ENCODE measurements at regions of chr10 and their contacts with region 1.

Region 1: DNA sequence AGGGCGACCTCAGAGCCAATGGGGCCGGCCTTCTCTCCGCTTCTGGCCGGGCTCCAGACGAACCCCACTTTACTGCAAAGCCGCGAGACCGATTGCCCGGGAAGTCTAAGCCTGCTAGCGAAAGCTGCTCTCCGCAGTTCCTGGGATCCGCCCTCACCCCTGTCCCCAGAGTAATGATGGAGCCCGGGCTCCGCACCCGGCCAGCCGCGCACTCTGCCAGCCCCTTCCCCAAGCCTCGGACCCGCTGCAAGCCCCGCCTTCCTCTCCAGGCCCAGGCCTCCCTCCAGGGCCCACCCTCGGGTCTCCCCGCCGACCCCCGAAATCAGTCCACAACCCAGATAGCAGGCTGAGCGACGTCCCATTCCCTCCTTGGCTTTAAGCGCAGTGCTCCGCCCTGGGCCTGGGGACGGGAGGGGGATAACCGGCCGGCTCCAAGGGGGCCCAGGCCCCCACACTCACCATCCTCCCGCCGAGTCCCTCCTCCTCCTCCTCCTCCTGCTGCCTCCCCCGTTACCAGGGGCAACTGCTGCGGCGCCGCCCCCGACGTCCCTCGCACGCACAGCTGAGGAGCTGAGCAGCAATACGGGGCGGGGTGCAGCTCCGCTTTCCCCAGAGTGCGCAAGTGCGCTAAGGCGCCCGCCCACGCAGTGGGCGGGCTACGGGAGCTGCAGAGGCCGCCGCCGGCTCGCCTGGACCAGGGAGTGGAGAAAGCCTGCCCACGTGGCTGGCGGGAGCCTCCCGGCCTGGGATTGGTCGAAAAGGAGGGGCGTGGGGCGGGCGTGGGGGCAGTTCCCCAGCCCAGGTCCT is at the start of gene ARL3:
- DNase-seq: peak; percentile 87
- H3K4me3 ChIP-seq: peak within 1 kb of the TSS; percentile 94
- H3K27me3 ChIP-seq: no peaks in the 10 kb centered on the region
- CTCF ChIP-seq: peak; percentile 67
- polyA plus RNA-seq, gene ARL3: 8.1 and 10.8 TPM in 2 replicates

Region 2: GRCh38 chr10:101257084-101257483 is 1456.9 kb before region 1 on chr10:
- CTCF ChIA-PET with region 1: no interaction called
- POLR2A ChIA-PET with region 1: interaction called, 10 read pairs
- DNase-seq: no peak
- H3K4me3 ChIP-seq: no peak overlapping the region
- H3K27me3 ChIP-seq: peaks cover 8% of the 10 kb centered on the region
- CTCF ChIP-seq: no peak

Region 3: DNA sequence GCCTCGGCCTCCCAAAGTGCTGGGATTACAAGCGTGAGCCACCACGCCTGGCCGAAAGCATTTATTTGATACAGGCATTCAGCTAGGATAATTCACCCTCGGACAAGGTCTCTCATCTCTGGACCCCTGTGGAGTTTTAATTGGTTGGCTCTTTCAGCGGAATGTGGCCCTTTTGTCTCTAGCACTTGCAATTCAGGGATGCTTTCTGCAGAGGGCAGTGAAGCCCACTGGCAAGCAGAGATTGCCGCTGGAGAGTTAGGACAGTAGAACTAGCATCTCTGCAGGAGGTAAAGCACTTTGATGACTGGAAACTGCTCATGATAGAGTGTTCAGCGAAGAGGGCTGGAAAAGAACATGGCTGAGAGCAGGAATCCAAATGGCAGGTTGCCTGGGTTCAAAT is 148.2 kb before region 1 on chr10:
- CTCF ChIA-PET with region 1: no interaction called
- POLR2A ChIA-PET with region 1: no interaction called
- DNase-seq: no peak
- H3K4me3 ChIP-seq: no peak overlapping the region
- H3K27me3 ChIP-seq: no peaks in the 10 kb centered on the region
- CTCF ChIP-seq: no peak

Region 4: GRCh38 chr10:102593074-102593803 is 120.8 kb before region 1 on chr10:
- CTCF ChIA-PET with region 1: no interaction called
- POLR2A ChIA-PET with region 1: no interaction called
- DNase-seq: peak; percentile 54
- H3K4me3 ChIP-seq: no peak overlapping the region
- H3K27me3 ChIP-seq: no peaks in the 10 kb centered on the region
- CTCF ChIP-seq: no peak

Region 5: GRCh38 chr10:102615361-102615760 is 98.7 kb before region 1 on chr10:
- CTCF ChIA-PET with region 1: no interaction called
- POLR2A ChIA-PET with region 1: no interaction called
- DNase-seq: no peak
- H3K4me3 ChIP-seq: no peak overlapping the region
- H3K27me3 ChIP-seq: no peaks in the 10 kb centered on the region
- CTCF ChIP-seq: peak; percentile 40; the same call in 1 of the 2 replicates

Region 6: GRCh38 chr10:102635377-102635776 is 78.6 kb before region 1 on chr10:
- CTCF ChIA-PET with region 1: no interaction called
- POLR2A ChIA-PET with region 1: no interaction called
- DNase-seq: no peak
- H3K4me3 ChIP-seq: no peak overlapping the region
- H3K27me3 ChIP-seq: no peaks in the 10 kb centered on the region
- CTCF ChIP-seq: no peak

Region 7: DNA sequence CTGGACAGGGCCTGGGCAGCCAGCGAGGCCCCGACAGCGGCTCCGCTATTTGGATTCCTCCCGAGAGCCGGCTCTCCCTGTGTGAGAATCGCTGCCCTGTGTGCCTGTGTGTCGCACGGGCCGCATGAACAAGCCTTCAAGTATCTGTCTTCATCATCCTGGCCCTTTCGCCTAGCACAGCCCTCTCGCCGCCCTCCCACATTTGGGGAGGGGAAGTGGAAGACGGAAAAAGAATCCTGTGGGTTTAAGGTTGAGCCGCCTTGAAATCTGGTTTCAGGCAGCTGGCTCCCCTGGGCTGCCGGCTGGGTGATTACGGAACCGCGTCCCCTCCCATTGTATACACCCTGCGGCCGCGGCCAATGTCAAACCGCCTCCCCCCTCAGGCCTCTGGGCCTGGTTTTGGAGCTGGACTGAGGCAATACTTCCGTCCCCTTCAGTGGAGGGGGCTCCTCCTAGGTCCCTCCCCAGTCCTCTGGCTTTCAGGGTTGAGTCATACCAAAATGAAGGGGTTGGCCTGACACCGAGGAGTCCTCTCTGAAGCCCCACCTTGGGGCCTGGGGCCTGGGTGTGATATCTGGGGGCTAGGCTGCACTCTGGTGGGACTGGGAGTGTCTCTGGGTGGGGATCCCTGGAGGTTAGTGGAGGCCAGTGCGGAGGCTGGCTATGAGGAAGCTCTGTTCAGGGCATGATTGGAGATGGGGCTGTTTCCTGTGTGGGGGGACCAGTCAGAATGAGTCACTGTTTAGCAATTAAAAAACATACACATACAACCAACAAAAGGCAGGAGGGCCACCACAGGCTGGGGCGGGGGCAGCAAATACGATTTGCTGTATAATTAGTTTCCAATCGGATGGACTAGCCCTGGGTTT is 68.0 kb before region 1 on chr10:
- CTCF ChIA-PET with region 1: interaction called, 10 read pairs
- POLR2A ChIA-PET with region 1: interaction called, 3 read pairs
- DNase-seq: peak; percentile 93
- H3K4me3 ChIP-seq: peak overlapping the region; percentile 87
- H3K27me3 ChIP-seq: no peaks in the 10 kb centered on the region
- CTCF ChIP-seq: no peak

Region 8: DNA sequence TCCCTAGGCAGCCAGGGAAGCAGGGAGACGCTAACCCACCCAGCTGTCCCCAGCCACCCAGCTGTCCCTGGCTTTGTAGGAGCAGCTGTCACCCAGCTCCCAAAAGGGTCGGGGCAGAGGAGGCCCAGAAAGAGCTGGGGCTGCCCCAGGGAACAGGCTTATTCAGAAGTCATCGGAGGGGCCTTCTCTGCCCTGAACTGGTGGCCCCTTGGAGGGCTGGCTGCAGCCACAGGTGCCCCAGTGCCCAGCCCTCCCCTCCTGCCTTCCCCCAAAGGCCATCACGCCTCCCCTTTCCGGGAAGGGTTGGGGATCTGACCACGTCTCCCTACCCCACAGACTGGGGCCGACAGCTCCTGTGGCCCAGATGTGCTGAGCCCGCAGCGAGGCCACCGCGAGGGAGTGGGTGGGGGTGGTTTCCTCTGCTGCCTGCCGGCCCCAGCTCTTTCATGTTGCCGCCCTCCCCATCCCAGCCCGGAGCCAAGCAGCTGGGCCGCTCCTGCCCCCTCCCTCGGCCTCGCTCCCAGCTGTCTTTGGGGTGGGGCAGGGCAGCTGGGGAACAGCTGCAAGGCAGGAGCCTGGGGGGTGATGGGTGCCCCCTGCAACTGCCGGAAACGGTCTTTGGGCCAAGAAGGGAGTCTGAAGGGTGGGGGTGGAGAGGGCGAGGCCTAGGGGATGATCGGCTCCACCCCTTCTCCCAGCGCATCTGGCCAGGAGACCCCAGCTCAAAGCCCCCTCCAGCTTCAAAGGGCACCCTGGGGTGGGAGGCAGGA is 52.9 kb before region 1 on chr10:
- CTCF ChIA-PET with region 1: interaction called, 3 read pairs
- POLR2A ChIA-PET with region 1: interaction called, 11 read pairs
- DNase-seq: peak; percentile 24
- H3K4me3 ChIP-seq: no peak overlapping the region
- H3K27me3 ChIP-seq: no peaks in the 10 kb centered on the region
- CTCF ChIP-seq: no peak